PC-9 (cell line): ENCODE measurements at regions of chr9 and their contacts with region 1.

Region 1: DNA sequence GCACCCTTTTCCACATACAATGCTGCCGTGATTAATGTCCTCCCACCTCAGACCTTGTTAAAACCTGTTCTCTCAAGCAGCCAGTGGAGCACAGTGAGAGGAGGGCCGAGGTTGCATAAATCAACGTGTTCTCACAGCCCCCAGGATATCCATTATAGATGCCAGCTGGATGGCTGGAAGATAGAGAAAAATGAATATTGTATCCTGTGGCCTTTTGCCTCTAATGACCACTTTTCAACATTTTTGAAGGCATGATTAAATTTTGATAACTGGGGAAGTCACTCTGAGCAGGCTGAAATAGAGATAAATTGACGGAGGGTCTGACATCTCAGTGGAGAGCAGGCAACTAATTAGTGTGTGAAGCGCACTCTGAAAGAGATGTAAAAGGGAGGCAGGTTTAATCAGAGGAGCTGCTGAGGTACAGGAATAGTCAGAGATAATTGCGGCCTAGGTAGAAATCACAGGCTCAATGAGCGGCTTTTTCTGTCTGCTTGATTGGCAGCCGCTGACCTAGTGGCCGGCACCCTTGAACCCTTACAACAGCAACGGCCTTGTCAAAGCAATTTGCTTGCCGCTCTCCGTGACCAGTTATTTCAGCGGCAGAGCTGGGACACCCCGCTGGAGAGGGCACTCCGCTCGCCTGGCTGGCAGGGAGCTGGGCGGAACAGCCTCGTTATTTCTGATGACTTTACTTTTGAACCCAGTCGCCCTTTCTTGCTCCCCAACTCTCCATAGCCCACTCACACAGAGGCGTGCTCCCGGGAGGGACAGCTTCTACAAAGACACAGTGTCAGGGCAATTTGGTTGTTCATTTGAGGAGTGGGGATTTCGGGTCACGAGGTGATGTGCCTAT is 560.7 kb downstream of the PSAT1 start:
- DNase-seq: no peak
- H3K4me3 ChIP-seq: no peak overlapping the region
- H3K27ac ChIP-seq: no peak overlapping the region
- H3K4me1 ChIP-seq: no peaks in the 10 kb centered on the region
- H3K27me3 ChIP-seq: peaks cover 5% of the 10 kb centered on the region; the same call in 1 of the 2 replicates
- CTCF ChIP-seq: no peak

Region 2: GRCh38 chr9:78871452-78872331 is 14.1 kb after region 1 on chr9:
- CTCF ChIA-PET with region 1: no interaction called
- POLR2A ChIA-PET with region 1: interaction called, 26 read pairs
- intact Hi-C with region 1: no loop called
- DNase-seq: peak in 1 of 2 experiments; percentile 49
- H3K4me3 ChIP-seq: no peak overlapping the region
- H3K27ac ChIP-seq: no peak overlapping the region
- H3K4me1 ChIP-seq: no peaks in the 10 kb centered on the region
- H3K27me3 ChIP-seq: no peaks in the 10 kb centered on the region
- CTCF ChIP-seq: no peak